ENCODE measurements at regions of chr7 and their contacts with region 1.

Region 1: DNA sequence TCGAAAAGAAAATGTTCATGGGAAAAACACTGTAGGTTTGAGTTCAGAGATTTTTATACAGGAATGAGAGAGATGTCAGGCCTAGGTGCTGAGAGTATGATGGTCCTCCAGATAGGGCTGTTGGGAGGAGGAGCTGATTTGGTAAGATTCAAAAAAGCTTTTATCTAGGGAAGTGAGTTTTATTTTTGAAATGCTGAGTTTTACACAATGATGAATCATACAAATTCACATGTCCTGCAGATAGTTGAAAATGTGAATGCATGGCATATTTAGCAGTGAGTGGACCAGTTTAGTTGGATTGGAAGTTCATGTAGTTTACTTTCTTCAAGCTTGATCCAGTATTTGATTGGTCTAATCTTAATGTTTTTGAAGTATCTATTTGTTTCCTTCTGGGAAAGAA is 154.8 kb downstream of the LRRC4 start:
- DNase-seq: no peak
- ATAC-seq: no peak
- H3K4me3 ChIP-seq: no peak overlapping the region
- H3K4me3 Mint-ChIP-seq: no peak overlapping the region
- H3K27ac ChIP-seq: no peak overlapping the region
- H3K27ac Mint-ChIP-seq: no peak overlapping the region
- H3K4me1 ChIP-seq: no peaks in the 10 kb centered on the region
- H3K4me1 Mint-ChIP-seq: peaks cover 35% of the 10 kb centered on the region
- H3K27me3 ChIP-seq: no peaks in the 10 kb centered on the region
- H3K27me3 Mint-ChIP-seq: no peaks in the 10 kb centered on the region
- CTCF ChIP-seq: no peak

Region 2: GRCh38 chr7:127844707-127845331 is 31.6 kb before region 1 on chr7:
- CTCF ChIA-PET with region 1: no interaction called
- POLR2A ChIA-PET with region 1: no interaction called
- intact Hi-C with region 1: loop called in 1 of 2 experiments (anchors 5 kb)
- DNase-seq: no peak
- ATAC-seq: no peak
- H3K4me3 ChIP-seq: no peak overlapping the region
- H3K4me3 Mint-ChIP-seq: no peak overlapping the region
- H3K27ac ChIP-seq: no peak overlapping the region
- H3K27ac Mint-ChIP-seq: no peak overlapping the region
- H3K4me1 ChIP-seq: no peaks in the 10 kb centered on the region
- H3K4me1 Mint-ChIP-seq: no peaks in the 10 kb centered on the region
- H3K27me3 ChIP-seq: no peaks in the 10 kb centered on the region
- H3K27me3 Mint-ChIP-seq: no peaks in the 10 kb centered on the region
- CTCF ChIP-seq: no peak

Region 3: DNA sequence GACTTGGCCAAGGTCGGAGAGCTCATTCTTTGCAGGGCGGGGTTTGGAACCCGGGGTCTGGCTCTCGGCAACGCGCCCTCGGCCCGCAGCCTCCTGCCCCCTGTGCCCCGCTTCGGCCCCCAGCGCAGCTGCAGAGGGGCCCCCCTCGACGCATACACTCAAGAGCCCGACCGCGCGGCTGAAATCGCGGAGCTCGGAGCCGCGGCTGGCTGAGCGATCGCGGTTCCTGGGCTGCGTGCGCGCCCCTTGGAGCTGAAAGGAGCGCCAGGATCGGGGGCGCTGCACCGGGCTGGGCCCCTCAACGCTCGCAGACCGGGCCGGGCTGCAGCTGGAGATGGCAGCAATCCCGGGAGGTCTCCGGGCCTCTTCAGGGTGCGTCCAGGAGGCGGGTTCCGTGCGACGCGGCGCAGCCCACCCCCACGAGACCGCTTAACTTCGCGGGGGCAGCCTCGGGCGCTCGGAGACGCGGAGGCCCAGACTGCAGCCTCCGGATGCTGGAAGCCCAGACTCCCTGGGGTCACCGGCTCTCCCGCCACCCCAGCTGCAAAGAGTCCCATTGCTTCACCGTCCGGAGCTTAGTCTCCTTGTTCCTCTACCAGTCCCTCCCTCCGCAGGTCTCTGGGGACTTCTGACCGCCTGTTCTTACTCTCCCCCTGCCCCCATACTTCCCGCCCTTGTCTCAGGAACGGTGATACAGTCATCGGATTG is 227.8 kb after region 1 on chr7:
- CTCF ChIA-PET with region 1: no interaction called
- POLR2A ChIA-PET with region 1: no interaction called
- intact Hi-C with region 1: no loop called
- DNase-seq: peak in 4 of 9 experiments; percentile 26 to 59 (median 43)
- ATAC-seq: peak; percentile 14
- H3K4me3 ChIP-seq: peak overlapping the region; percentile 54 to 56
- H3K4me3 Mint-ChIP-seq: peak overlapping the region; percentile 84
- H3K27ac ChIP-seq: no peak overlapping the region
- H3K27ac Mint-ChIP-seq: peak overlapping the region; percentile 71
- H3K4me1 ChIP-seq: peaks cover 45% of the 10 kb centered on the region
- H3K4me1 Mint-ChIP-seq: peaks cover 63% of the 10 kb centered on the region
- H3K27me3 ChIP-seq: no peaks in the 10 kb centered on the region
- H3K27me3 Mint-ChIP-seq: no peaks in the 10 kb centered on the region
- CTCF ChIP-seq: no peak

Measured in CD8-positive, alpha-beta T cell (primary cell).